ENCODE measurements at regions of chr3 and their contacts with region 1.

Region 1: GRCh38 chr3:44529927-44530326 is 25.1 kb upstream of the ZKSCAN7 start:
- DNase-seq: peak; percentile 24 to 63 (median 53)
- H3K4me3 ChIP-seq: no peak overlapping the region
- H3K27ac ChIP-seq: no peak overlapping the region
- H3K4me1 ChIP-seq: no peaks in the 10 kb centered on the region
- H3K27me3 ChIP-seq: peaks cover 0 to 4% (median 0%) of the 10 kb centered on the region in 5 experiments

Region 2: DNA sequence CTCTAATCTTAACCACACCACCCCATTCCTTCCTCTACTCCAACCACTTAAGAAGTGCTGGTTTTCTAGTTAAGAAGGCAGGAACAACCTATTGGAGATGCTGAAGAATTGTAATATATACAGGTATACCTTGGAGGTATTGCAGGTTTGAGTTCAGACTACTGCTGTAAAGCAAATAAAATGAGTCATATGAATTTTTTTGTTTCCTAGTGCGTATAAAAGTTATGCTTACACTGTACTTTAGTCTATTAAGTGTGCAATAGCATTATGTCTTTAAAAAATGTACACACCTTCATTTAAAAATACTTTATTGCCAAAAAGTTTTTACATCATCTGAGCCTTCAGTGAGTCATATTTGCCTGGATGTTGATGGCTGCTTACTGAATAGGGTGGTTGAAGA is 265.8 kb before region 1 on chr3:
- CTCF ChIA-PET with region 1: no interaction called
- POLR2A ChIA-PET with region 1: no interaction called
- DNase-seq: no peak
- H3K4me3 ChIP-seq: no peak overlapping the region
- H3K27ac ChIP-seq: no peak overlapping the region
- H3K4me1 ChIP-seq: peaks cover 0 to 4% (median 0%) of the 10 kb centered on the region in 4 experiments
- H3K27me3 ChIP-seq: no peaks in the 10 kb centered on the region

Region 3: GRCh38 chr3:44913868-44914468 is 384.0 kb after region 1 on chr3:
- CTCF ChIA-PET with region 1: interaction called, 26 read pairs
- POLR2A ChIA-PET with region 1: no interaction called
- DNase-seq: peak; percentile 55 to 77 (median 66)
- H3K4me3 ChIP-seq: no peak overlapping the region
- H3K27ac ChIP-seq: no peak overlapping the region
- H3K4me1 ChIP-seq: no peaks in the 10 kb centered on the region
- H3K27me3 ChIP-seq: peaks cover 0 to 6% (median 2%) of the 10 kb centered on the region in 5 experiments

Measured in common myeloid progenitor, CD34-positive (primary cell).